ENCODE measurements at regions of chr11 and their contacts with region 1.

Region 1: DNA sequence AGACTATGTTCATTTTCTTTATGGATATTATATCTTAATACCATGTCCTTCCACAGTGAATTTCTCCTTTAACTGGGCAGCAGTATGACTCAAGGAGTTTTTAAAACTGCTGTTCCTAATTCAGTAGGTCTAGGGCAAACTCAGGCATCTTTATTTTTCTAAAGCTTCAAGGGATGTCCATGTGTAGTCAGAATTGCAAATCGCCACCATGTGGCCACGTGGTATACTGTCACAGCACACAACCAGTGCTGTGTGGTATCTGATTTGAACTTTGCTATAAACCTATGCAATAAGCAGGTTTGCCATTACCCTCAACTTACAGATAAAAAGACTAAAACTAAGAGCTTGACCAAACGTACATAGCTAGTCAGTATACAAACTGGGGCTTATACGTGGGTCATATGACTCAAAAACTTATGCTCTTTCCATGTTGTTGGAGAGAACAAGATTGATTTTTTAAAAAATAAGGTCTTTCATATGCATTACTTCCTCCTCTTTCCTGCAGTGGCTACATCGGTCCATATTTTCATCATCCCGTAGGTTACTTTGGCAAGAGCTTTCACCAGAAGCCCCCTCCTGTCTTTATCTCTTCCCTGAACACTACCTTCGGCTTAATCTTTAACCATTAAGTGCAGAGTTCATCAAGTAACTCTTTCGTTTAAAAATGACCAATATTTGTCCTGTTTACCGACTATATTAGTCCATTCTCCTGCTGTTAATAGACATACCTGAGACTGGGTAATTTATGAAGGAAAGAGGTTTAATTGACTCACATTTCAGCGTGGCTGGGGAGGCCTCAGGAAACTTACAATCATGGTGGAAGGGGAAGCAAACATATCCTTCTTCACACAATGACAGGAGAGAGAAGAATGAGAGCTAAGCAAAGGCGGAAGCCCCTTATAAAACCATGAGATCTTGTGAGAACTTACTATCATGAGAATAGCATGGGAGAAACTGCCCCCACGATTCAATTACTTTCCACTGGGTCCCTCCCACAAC is 8.0 kb upstream of the HTATIP2 start:
- DNase-seq: no peak
- H3K4me3 ChIP-seq: no peak overlapping the region
- H3K27ac ChIP-seq: no peak overlapping the region
- H3K4me1 ChIP-seq: peaks cover 0 to 13% (median 5%) of the 10 kb centered on the region in 6 donors
- H3K27me3 ChIP-seq: no peaks in the 10 kb centered on the region
- CTCF ChIP-seq: peak in 9 of 11 experiments; percentile 19 to 64 (median 53)
- POLR2A ChIP-seq: no peak

Region 2: DNA sequence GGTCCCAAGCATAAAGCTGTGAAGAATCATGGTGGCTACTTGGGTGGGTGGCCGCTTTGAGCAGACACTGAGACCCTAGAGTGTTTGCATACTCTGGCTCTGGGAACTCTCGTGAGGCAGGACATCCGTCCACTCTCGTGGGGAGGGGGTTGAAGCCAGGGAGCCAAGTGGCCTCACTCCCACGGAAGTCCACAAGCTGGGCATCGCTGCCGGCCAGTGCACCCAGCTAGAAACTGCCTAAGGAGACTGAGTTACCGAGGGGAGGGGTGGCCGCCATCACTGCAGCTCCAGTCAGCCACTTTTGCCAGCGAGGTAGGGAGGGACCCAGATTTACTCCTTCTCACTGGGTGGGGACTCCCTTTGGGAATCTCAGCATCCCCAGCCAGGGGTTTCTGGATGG is 1315.5 kb before region 1 on chr11:
- intact Hi-C with region 1: no loop called
- DNase-seq: no peak
- H3K4me3 ChIP-seq: no peak overlapping the region
- H3K27ac ChIP-seq: no peak overlapping the region
- H3K4me1 ChIP-seq: no peaks in the 10 kb centered on the region
- H3K27me3 ChIP-seq: peaks cover 0 to 12% (median 0%) of the 10 kb centered on the region in 7 donors
- CTCF ChIP-seq: no peak
- POLR2A ChIP-seq: no peak

Region 3: DNA sequence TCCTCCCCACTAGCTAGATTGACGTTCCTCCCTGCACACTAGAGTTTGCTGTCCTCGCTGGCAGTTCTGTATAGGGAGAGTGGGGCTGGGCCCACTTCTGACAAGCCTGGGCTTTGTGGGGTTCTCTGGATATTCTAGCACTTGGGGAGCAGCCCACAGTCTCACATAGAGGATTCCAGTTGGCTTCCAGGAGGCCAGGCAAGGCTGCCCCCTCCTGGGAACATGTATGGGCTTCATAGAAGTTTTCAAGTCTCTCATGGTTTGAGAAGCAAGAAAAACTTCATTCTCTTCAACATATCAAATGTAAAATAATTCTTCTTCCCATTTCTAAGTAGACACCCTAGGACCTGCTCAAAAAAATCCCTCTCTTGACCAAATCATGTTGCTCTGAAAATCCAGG is 555.4 kb before region 1 on chr11:
- intact Hi-C with region 1: no loop called
- DNase-seq: no peak
- H3K4me3 ChIP-seq: no peak overlapping the region
- H3K27ac ChIP-seq: no peak overlapping the region
- H3K4me1 ChIP-seq: peaks cover 0 to 13% (median 5%) of the 10 kb centered on the region in 6 donors
- H3K27me3 ChIP-seq: no peaks in the 10 kb centered on the region
- CTCF ChIP-seq: no peak
- POLR2A ChIP-seq: no peak

Region 4: DNA sequence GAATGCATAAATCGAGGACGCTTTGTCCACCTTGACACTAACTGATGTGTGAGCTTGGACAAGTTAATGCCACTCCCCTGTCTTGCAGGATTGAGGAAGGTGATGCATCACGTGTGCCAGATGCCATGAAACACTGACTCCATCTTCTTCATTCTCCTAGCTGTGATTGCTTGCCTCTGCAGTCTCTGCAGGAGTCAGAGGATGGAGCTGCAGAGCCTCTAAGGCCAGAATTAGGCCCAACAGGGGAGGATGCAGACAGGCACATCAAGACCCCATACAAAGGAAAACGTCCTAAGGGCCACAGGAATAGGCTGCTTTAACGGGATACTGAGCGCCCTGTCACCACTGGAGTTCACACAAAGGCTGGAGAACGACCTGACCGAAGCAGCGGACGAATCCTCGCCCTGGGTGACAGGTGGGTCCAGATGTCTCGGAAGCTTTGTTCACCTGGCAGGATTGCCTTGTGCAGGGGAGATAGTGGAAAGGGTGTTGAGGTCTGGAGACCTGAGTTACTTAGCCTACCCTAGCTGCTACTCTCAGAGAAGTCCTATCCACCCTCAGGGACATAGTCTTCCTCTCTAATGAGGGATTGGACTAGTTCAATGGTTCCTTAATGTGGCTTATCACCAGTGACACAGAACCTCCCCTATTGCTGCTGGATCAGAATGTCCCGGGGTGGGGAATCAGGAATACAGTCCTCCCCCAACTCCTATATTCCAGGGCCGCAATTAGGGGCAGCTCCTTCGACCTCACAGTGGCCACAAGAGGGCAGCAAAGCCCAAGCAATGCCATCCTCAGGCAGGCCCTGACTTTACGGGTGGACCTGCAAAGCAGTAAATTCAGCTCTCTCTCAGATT is 227.6 kb before region 1 on chr11:
- intact Hi-C with region 1: loop called (anchors 5 kb)
- DNase-seq: peak; percentile 88
- H3K4me3 ChIP-seq: no peak overlapping the region
- H3K27ac ChIP-seq: no peak overlapping the region
- H3K4me1 ChIP-seq: peaks cover 0 to 13% (median 10%) of the 10 kb centered on the region in 6 donors
- H3K27me3 ChIP-seq: peaks cover 0 to 28% (median 11%) of the 10 kb centered on the region in 7 donors
- CTCF ChIP-seq: peak; percentile 37 to 89 (median 81)
- POLR2A ChIP-seq: no peak

Region 5: GRCh38 chr11:20387241-20388095 is 31.9 kb after region 1 on chr11 and contains the start of gene PRMT3:
- intact Hi-C with region 1: no loop called
- DNase-seq: peak; percentile 100
- H3K4me3 ChIP-seq: peak within 1 kb of the TSS; percentile 62 to 99 (median 88)
- H3K27ac ChIP-seq: peak within 1 kb of the TSS; percentile 82 to 98 (median 94)
- H3K4me1 ChIP-seq: peaks cover 6 to 35% (median 21%) of the 10 kb centered on the region in 6 donors
- H3K27me3 ChIP-seq: no peaks in the 10 kb centered on the region
- CTCF ChIP-seq: peak; percentile 24 to 99 (median 96)
- POLR2A ChIP-seq: peak; percentile 80 to 93 (median 88)
- total RNA-seq, gene PRMT3: 12.8 to 20.7 (median 14.2) TPM

Measured in spleen (tissue), 13 donors.